ENCODE measurements at regions of chr19 and their contacts with region 1.

Region 1: DNA sequence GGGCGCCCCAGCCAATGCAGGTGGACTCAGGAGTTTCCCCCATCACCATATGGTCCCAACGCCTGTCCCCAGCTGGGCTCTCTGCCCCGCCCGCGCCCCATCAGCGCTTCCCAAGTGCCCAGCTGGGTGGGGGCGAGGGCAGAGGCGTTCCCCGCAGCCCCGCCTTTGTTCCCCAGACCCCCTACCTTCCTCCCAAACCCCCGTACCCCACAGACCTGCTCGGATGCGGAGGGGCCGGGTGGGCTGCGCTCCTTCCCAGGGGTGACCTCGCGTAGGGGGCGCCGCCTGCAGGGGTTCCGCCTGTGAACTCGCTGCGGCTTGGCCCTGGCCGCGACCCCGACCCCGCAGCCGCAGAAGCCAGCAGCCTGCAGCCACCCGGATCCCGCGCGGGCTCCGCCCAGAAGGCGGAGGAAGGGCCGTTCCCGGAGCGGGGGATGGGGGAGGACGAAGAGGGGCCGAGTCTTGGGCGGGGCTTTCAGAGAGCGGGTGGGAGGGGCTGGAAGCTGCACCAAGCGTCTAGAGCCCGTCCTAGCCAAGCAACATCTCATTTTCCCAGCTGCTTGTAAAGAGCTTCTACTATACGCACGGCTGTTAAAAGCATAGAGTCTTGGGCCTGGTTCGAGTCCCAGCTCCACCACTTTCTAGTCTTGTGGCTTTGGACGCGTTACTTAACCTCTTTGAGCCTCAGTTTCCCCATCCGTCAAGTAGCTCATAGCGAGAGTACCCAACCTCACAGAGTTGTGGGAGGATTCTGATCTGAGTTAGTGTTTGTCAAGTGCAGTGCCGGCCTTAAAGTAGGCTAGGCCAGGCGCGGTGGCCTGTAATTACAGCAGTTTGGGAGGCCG is at the start of gene RAB3D:
- H3K4me3 Mint-ChIP-seq: peak within 1 kb of the TSS; percentile 98
- H3K27ac Mint-ChIP-seq: peak within 1 kb of the TSS; percentile 84
- H3K4me1 Mint-ChIP-seq: peaks cover 34% of the 10 kb centered on the region
- H3K27me3 Mint-ChIP-seq: no peaks in the 10 kb centered on the region

Region 2: GRCh38 chr19:11293433-11294389 is 45.8 kb before region 1 on chr19:
- intact Hi-C with region 1: loop called (anchors 5 kb)
- H3K4me3 Mint-ChIP-seq: peak overlapping the region; percentile 61
- H3K27ac Mint-ChIP-seq: peak overlapping the region; percentile 48
- H3K4me1 Mint-ChIP-seq: peaks cover 53% of the 10 kb centered on the region
- H3K27me3 Mint-ChIP-seq: peaks cover 4% of the 10 kb centered on the region

Measured in dendritic cell treated with granulocyte-macrophage colony-stimulating factor and Interleukin-4, amounts not matched to agents 40 ng/mL and 50 ng/mL, for 4 days (primary cell).